ENCODE measurements at regions of chr6 and their contacts with region 1.

Region 1: DNA sequence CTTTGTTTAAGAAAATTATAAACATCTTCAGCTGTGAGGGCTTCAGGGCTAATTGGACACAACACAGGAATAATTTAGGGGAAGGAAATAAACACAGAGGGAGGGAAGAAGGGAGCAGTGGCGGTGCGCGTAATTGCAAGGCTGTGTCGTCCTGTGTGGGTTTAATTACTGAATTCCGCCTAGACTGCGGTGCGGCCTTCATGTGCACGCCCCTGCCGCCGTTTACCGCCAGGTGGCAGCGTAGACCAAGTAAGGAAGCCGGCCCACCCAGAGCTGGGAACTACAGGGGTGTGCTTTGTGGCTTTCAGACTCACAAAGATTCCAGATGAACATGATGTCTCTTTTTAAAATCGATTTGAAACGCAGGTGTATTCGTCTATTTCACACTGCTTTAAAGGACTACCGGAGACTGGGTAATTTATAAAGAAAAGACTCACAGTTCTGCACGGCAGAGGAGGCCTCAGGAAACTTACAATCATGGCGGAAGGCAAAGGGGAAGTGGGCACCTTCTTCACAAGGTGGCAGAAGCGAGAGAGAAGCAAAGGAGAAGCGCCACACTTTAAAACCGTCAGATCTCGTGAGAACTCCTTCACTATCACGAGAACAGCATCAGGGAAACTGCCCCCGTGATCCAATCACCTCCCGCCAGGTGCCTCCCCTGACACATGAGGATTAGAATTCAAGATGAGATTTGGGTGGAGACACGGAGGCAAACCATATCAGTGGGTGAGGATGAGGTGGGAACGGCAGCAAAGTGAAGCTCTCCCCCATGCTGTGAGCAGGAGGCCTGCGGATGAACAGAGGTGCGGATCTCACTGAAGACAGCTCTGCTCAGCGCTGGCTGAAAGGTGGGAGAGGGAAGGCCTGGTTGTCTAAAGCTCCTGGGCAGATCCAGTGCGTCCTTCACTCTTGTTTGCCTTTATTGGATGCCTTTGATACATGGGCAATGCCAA is 222.0 kb upstream of the PDE10A start:
- DNase-seq: no peak
- ATAC-seq: peak; percentile 99
- H3K4me3 ChIP-seq: no peak overlapping the region
- H3K27ac ChIP-seq: no peak overlapping the region
- H3K4me1 ChIP-seq: no peaks in the 10 kb centered on the region
- H3K27me3 ChIP-seq: peaks cover 7% of the 10 kb centered on the region; the same call in 1 of the 2 replicates
- CTCF ChIP-seq: peak; percentile 95

Region 2: GRCh38 chr6:163906006-163906710 is 1978.9 kb before region 1 on chr6:
- CTCF ChIA-PET with region 1: no interaction called
- POLR2A ChIA-PET with region 1: interaction called, 10 read pairs
- in situ Hi-C with region 1: no loop called
- intact Hi-C with region 1: no loop called
- DNase-seq: no peak
- ATAC-seq: no peak
- H3K4me3 ChIP-seq: no peak overlapping the region
- H3K27ac ChIP-seq: no peak overlapping the region
- H3K4me1 ChIP-seq: no peaks in the 10 kb centered on the region
- H3K27me3 ChIP-seq: peaks cover 2% of the 10 kb centered on the region; the same call in 1 of the 2 replicates
- CTCF ChIP-seq: no peak

Region 3: DNA sequence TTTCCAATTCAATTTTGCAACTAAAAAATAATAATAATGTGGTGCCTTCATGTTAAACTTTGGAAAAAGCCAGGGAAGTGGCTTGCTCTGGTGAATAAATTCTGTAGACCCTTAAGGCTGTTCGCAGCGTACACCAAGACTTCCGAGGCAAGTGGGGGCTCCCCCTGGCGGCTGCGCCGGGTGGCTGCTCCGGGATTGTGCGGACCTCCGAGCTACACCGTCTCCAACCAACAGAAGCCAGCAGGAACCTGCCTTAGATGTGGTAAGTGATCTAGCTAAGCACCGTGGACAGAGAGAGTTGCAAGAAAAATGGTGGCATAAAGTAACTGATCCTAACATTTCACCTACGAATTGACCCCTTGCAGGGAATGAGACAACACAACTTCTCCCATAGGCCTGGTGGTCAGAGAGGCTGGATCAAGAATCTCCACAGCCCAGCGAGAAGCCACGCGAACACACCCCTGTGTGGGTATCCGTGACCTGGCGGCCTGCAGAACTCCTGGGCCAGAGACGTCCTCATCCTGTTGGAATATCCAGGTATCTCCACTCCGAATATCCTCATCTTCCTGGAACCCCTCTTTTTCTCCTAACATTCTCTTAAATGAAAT is 212.9 kb after region 1 on chr6:
- CTCF ChIA-PET with region 1: interaction called, 16 read pairs
- POLR2A ChIA-PET with region 1: no interaction called
- in situ Hi-C with region 1: no loop called
- intact Hi-C with region 1: loop called (anchors 2 kb)
- DNase-seq: peak; percentile 48
- ATAC-seq: peak; percentile 100
- H3K4me3 ChIP-seq: peak overlapping the region; percentile 37 to 52
- H3K27ac ChIP-seq: no peak overlapping the region
- H3K4me1 ChIP-seq: no peaks in the 10 kb centered on the region
- H3K27me3 ChIP-seq: no peaks in the 10 kb centered on the region
- CTCF ChIP-seq: peak; percentile 96

Region 4: GRCh38 chr6:166106076-166106686 is 221.1 kb after region 1 on chr6:
- CTCF ChIA-PET with region 1: interaction called, 6 read pairs
- POLR2A ChIA-PET with region 1: no interaction called
- in situ Hi-C with region 1: no loop called
- intact Hi-C with region 1: loop called (anchors 2 kb)
- DNase-seq: peak; percentile 42
- ATAC-seq: peak; percentile 92
- H3K4me3 ChIP-seq: no peak overlapping the region
- H3K27ac ChIP-seq: no peak overlapping the region
- H3K4me1 ChIP-seq: no peaks in the 10 kb centered on the region
- H3K27me3 ChIP-seq: peaks cover 8% of the 10 kb centered on the region
- CTCF ChIP-seq: peak; percentile 90